HCT116 (cell line): ENCODE measurements at regions of chr2 and their contacts with region 1.

Region 1: GRCh38 chr2:127197475-127198385 is 22.4 kb downstream of the CYP27C1 start:
- DNase-seq: peak; percentile 63
- ATAC-seq: peak; percentile 99
- H3K4me3 ChIP-seq: peak overlapping the region; percentile 25 to 53
- H3K27ac ChIP-seq: no peak overlapping the region
- H3K4me1 ChIP-seq: peaks cover 0 to 11% of the 10 kb centered on the region in 2 experiments; a peak in 2 of 4 replicates
- H3K27me3 ChIP-seq: no peaks in the 10 kb centered on the region
- CTCF ChIP-seq: peak; percentile 80 to 90 (median 84); a peak in 5 of 6 replicates
- POLR2A ChIP-seq: no peak
- RAD21 ChIP-seq: peak; percentile 91

Region 2: GRCh38 chr2:126600742-126601141 is 597.0 kb before region 1 on chr2:
- CTCF ChIA-PET with region 1: no interaction called
- POLR2A ChIA-PET with region 1: no interaction called
- RAD21 ChIA-PET with region 1: no interaction called
- intact Hi-C with region 1: no loop called
- DNase-seq: no peak
- ATAC-seq: no peak
- H3K4me3 ChIP-seq: no peak overlapping the region
- H3K27ac ChIP-seq: no peak overlapping the region
- H3K4me1 ChIP-seq: no peaks in the 10 kb centered on the region
- H3K27me3 ChIP-seq: no peaks in the 10 kb centered on the region
- CTCF ChIP-seq: no peak
- POLR2A ChIP-seq: no peak
- RAD21 ChIP-seq: no peak

Region 3: DNA sequence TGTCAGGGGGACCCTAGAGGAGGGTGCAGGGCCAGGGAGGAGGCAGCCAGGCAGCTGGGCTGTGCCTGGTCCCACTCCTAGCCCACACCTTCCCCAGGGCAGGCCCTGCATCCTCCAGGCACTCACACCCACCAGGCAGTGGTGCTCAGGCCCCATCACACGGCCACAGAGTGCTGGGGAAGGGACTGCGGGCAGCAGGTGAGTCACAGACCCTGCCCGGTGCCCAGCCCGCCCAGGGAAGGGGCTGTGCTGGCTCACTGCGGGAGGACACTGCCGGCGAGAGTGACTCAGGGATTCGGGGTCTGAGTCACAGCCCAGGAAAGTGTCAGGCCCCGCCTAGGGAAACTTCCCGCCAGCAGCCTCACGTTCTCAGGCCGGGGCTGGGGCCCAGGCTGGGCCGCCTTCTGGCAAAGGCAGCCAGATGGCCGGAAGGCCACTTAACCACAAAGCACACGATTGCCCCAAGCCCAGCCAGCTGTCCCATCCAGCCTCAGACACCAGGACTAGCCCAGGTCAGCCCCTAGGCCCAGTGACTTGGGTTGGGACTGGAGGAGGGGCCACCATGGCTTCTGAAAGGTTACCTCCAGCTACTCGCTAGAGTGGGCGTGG is 133.0 kb before region 1 on chr2:
- CTCF ChIA-PET with region 1: interaction called, 10 read pairs
- POLR2A ChIA-PET with region 1: no interaction called
- RAD21 ChIA-PET with region 1: no interaction called
- intact Hi-C with region 1: loop called (anchors 1 kb)
- DNase-seq: peak; percentile 87
- ATAC-seq: peak; percentile 86
- H3K4me3 ChIP-seq: peak overlapping the region; percentile 16 to 54
- H3K27ac ChIP-seq: peak overlapping the region; percentile 92
- H3K4me1 ChIP-seq: peaks cover 31 to 57% of the 10 kb centered on the region in 2 experiments
- H3K27me3 ChIP-seq: no peaks in the 10 kb centered on the region
- CTCF ChIP-seq: no peak
- POLR2A ChIP-seq: no peak
- RAD21 ChIP-seq: no peak

Region 4: GRCh38 chr2:127217485-127218321 is 20.0 kb after region 1 on chr2:
- CTCF ChIA-PET with region 1: interaction called, 10 read pairs
- POLR2A ChIA-PET with region 1: no interaction called
- RAD21 ChIA-PET with region 1: no interaction called
- intact Hi-C with region 1: no loop called
- DNase-seq: peak; percentile 23
- ATAC-seq: peak; percentile 83
- H3K4me3 ChIP-seq: no peak overlapping the region
- H3K27ac ChIP-seq: no peak overlapping the region
- H3K4me1 ChIP-seq: peaks cover 0 to 11% of the 10 kb centered on the region in 2 experiments; a peak in 1 of 4 replicates
- H3K27me3 ChIP-seq: no peaks in the 10 kb centered on the region
- CTCF ChIP-seq: no peak
- POLR2A ChIP-seq: no peak
- RAD21 ChIP-seq: no peak

Region 5: DNA sequence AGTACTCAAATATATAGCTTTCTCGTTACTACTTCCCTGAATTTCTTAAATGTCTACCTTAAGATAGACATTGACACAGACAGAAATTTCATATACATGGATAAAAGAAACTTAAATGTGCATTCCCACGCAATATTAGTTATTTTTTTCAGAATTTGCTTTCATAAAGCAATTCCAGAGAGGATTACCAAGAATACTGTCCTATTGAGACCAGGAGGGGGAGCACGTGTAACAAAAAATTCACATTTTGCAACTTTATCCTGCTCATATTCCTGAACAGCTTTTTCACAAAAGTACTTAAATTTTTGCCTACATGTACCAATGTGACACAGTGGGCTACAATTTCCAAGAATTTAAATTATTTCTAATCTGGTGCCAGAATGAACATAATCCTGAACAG is 126.9 kb after region 1 on chr2:
- CTCF ChIA-PET with region 1: interaction called, 4 read pairs
- POLR2A ChIA-PET with region 1: no interaction called
- RAD21 ChIA-PET with region 1: no interaction called
- intact Hi-C with region 1: loop called (anchors 1 kb)
- DNase-seq: no peak
- ATAC-seq: peak; percentile 64
- H3K4me3 ChIP-seq: no peak overlapping the region
- H3K27ac ChIP-seq: no peak overlapping the region
- H3K4me1 ChIP-seq: no peaks in the 10 kb centered on the region
- H3K27me3 ChIP-seq: no peaks in the 10 kb centered on the region
- CTCF ChIP-seq: peak; percentile 53 to 70 (median 58); a peak in 5 of 6 replicates
- POLR2A ChIP-seq: no peak
- RAD21 ChIP-seq: peak; percentile 65

Region 6: GRCh38 chr2:127479219-127479825 is 281.6 kb after region 1 on chr2:
- CTCF ChIA-PET with region 1: interaction called, 48 read pairs
- POLR2A ChIA-PET with region 1: no interaction called
- RAD21 ChIA-PET with region 1: interaction called, 4 to 8 read pairs
- intact Hi-C with region 1: loop called (anchors 1 kb)
- DNase-seq: peak; percentile 34
- ATAC-seq: peak; percentile 86
- H3K4me3 ChIP-seq: no peak overlapping the region
- H3K27ac ChIP-seq: no peak overlapping the region
- H3K4me1 ChIP-seq: no peaks in the 10 kb centered on the region
- H3K27me3 ChIP-seq: no peaks in the 10 kb centered on the region
- CTCF ChIP-seq: peak; percentile 67 to 86 (median 72)
- POLR2A ChIP-seq: no peak
- RAD21 ChIP-seq: peak; percentile 81

Region 7: DNA sequence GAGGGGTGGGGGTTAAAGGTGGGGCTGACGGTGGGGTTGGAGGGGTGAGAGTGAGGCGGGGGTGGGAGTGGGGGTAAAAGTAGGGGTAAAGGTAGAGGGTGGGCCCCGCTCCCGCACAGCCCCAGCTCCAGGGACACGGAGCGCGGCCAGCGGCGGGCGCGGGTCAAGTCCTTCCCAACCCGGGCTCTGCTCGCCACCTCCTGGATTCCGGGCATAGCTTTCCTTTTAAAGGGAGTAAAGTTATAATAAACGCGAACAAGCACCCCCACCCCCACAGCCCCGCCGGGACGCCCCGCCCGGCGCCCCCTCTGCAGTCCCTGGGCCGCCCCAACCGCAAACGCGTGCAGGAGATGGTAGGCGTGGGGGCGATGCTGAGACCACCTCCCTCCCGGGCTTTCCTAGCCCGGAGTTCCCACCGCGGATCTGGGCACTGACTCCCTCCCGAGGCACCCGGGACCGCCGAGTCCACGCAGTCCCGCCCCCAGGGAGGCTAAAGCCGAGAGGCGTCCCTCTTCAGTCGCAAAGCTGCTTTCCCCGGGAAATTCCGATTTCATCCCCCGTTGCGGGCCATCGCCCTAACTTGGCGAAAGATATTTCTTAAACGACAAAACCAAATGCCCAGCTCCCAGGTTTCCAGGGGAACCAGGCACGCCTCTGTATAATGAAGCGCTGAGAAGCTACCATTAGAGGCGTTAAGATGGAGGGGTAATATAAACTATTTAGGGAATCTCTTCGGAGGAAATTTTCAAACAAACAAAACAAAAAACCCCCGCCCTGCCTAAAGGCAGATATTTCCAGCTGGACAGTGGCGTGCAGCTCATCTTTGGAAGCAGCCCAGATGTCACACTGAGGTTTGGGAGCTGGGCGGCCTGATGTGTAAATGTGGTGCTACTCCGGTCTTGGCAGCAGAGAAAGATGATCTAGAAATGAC is 477.9 kb after region 1 on chr2 and contains the start of gene LIMS2:
- CTCF ChIA-PET with region 1: interaction called, 5 read pairs
- POLR2A ChIA-PET with region 1: no interaction called
- RAD21 ChIA-PET with region 1: no interaction called
- intact Hi-C with region 1: loop called (anchors 10 kb)
- DNase-seq: no peak
- ATAC-seq: peak; percentile 72
- H3K4me3 ChIP-seq: peak within 1 kb of the TSS; percentile 43 to 59
- H3K27ac ChIP-seq: no peak within 1 kb of the TSS; the same call in 1 of the 2 replicates
- H3K4me1 ChIP-seq: peaks cover 0 to 15% of the 10 kb centered on the region in 2 experiments; a peak in 2 of 4 replicates
- H3K27me3 ChIP-seq: peaks cover 7% of the 10 kb centered on the region; the same call in 1 of the 2 replicates
- CTCF ChIP-seq: no peak
- POLR2A ChIP-seq: no peak
- RAD21 ChIP-seq: peak; percentile 37
- total RNA-seq, gene LIMS2: 3.7 TPM